Activated CD4-positive, alpha-beta T cell treated with anti-CD3 and anti-CD28 coated beads for 36 hours (primary cell): ENCODE measurements at regions of chr14 and their contacts with region 1.

Region 1: DNA sequence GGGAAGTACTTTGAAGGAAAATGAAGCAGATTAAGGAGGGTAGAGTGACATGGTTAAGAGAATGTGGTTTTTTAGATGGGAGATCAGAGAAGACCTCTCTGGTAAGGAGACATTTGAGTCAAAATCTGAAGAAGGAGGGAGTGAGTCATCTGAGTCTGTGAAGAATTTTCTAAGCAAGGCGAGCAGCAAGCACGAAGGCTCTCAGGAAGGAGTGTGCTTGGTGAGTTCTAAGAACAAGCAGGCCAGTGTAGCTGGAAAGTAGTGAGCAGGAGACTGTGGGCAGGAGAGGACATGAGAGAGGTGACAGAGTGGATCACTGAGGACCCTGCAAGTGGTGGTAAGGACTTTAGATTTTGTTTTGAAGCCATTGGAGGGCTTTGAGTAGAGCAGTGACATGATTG is 76.3 kb upstream of the FUT8 start:
- DNase-seq: peak; percentile 72
- ATAC-seq: peak; percentile 89
- H3K4me3 Mint-ChIP-seq: peak overlapping the region; percentile 74
- H3K27ac Mint-ChIP-seq: peak overlapping the region; percentile 95
- H3K4me1 Mint-ChIP-seq: peaks cover 55% of the 10 kb centered on the region
- H3K27me3 Mint-ChIP-seq: no peaks in the 10 kb centered on the region

Region 2: DNA sequence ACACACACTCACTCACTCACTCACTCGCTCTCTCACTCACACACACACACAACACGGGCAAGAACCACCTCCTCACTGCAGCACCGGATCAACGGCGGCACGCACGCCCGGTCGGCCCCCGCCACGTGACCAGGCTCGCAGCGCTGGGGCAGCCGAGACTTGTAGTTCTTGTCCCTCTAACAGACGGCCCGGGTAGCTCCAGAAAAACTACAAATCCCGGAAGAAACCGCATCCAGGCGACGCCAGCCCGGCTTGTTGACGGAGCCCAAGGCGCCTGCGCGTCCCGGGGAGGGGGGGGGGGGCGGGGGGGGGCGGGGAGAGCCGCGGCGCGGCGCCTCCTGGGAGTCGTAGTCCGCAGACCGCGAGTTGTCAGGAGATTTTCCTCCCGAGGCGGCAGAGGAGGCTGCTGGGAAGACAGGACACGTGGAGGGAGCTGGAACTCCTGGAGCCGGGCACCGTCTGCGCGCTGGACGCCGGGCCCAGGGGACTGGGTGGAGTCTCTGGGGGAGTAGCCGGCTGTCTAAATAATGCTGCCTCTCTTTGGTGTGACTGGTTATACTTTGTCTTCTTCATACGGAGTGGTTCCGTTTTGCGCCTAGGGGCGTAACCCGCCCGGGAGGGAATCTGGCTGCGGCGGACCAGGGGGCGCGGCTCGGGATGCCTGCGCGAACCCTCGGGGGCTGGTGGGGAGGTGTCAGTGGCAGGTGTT is 233.6 kb before region 1 on chr14 and contains the start of gene MAX:
- CTCF ChIA-PET with region 1: no interaction called
- POLR2A ChIA-PET with region 1: no interaction called
- intact Hi-C with region 1: loop called in 1 of 2 experiments (anchors 5 kb)
- DNase-seq: peak; percentile 99
- ATAC-seq: peak; percentile 95
- H3K4me3 Mint-ChIP-seq: peak within 1 kb of the TSS; percentile 89
- H3K27ac Mint-ChIP-seq: peak within 1 kb of the TSS; percentile 96
- H3K4me1 Mint-ChIP-seq: peaks cover 40% of the 10 kb centered on the region
- H3K27me3 Mint-ChIP-seq: peaks cover 2% of the 10 kb centered on the region
- total RNA-seq, gene MAX: 93.6 to 136 TPM

Region 3: GRCh38 chr14:65229751-65230749 is 106.1 kb before region 1 on chr14:
- CTCF ChIA-PET with region 1: no interaction called
- POLR2A ChIA-PET with region 1: no interaction called
- intact Hi-C with region 1: no loop called
- DNase-seq: peak; percentile 65
- ATAC-seq: peak; percentile 84
- H3K4me3 Mint-ChIP-seq: peak overlapping the region; percentile 71
- H3K27ac Mint-ChIP-seq: peak overlapping the region; percentile 92
- H3K4me1 Mint-ChIP-seq: peaks cover 41% of the 10 kb centered on the region
- H3K27me3 Mint-ChIP-seq: no peaks in the 10 kb centered on the region

Region 4: DNA sequence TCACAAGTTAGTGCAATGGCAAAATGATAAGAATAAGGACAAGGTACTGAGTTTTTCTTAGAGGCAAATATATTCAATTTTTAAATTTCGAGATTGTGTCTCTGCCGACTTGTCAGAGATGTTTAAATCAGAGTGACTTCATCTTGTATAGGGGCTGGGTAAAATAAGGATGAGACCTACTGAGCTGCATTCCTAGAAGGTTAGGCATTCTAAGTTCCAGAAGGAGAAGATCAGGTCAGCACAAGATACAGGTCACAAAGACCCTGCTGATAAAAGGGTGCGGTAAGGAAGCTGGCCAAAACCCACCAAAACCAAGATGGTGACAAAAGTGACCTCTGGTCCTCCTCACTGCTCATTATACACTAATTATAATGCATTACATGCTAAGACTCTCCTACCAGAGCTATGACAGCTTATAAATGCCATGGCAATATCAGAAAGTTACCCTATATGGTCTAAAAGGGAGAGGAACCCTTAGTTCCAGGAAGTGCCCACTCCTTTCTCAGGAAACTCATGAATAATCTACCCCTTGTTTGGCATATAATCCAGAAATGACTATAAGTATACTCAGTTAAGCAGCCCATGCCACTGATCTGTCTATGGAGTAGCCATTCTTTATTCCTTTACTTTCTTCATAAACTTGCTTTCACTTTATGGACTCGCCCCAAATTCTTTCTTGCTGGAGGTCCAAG is 33.2 kb after region 1 on chr14:
- CTCF ChIA-PET with region 1: no interaction called
- POLR2A ChIA-PET with region 1: interaction called, 3 read pairs
- intact Hi-C with region 1: loop called (anchors 1 kb)
- DNase-seq: peak; percentile 21
- ATAC-seq: peak; percentile 84
- H3K4me3 Mint-ChIP-seq: no peak overlapping the region
- H3K27ac Mint-ChIP-seq: peak overlapping the region; percentile 49
- H3K4me1 Mint-ChIP-seq: peaks cover 32% of the 10 kb centered on the region
- H3K27me3 Mint-ChIP-seq: no peaks in the 10 kb centered on the region

Region 5: DNA sequence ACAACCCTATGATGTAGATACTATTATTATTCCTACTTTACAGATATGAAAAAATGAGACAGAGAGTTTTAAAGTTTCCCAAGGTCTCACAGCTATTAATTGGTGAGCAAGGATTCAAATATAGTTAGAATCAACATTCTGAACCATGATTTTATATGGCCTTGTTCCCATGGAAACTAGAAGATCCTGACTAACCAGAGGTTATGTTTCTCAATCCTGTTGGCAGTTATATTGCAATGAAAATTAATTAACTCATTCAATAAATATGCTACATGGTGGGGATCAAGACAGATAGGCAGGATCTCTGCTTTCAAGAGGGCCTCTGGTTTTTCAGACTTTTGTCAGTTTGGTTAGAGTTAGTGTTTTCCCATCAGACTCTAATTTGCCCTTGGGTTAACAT is 67.0 kb after region 1 on chr14:
- CTCF ChIA-PET with region 1: no interaction called
- POLR2A ChIA-PET with region 1: no interaction called
- intact Hi-C with region 1: no loop called
- DNase-seq: no peak
- ATAC-seq: no peak
- H3K4me3 Mint-ChIP-seq: no peak overlapping the region
- H3K27ac Mint-ChIP-seq: no peak overlapping the region
- H3K4me1 Mint-ChIP-seq: peaks cover 2% of the 10 kb centered on the region
- H3K27me3 Mint-ChIP-seq: no peaks in the 10 kb centered on the region

Region 6: GRCh38 chr14:65574611-65575010 is 238.4 kb after region 1 on chr14:
- CTCF ChIA-PET with region 1: no interaction called
- POLR2A ChIA-PET with region 1: no interaction called
- intact Hi-C with region 1: no loop called
- DNase-seq: no peak
- ATAC-seq: no peak
- H3K4me3 Mint-ChIP-seq: no peak overlapping the region
- H3K27ac Mint-ChIP-seq: no peak overlapping the region
- H3K4me1 Mint-ChIP-seq: peaks cover 10% of the 10 kb centered on the region
- H3K27me3 Mint-ChIP-seq: no peaks in the 10 kb centered on the region